IMR-90 (cell line): ENCODE measurements at regions of chr20 and their contacts with region 1.

Region 1: DNA sequence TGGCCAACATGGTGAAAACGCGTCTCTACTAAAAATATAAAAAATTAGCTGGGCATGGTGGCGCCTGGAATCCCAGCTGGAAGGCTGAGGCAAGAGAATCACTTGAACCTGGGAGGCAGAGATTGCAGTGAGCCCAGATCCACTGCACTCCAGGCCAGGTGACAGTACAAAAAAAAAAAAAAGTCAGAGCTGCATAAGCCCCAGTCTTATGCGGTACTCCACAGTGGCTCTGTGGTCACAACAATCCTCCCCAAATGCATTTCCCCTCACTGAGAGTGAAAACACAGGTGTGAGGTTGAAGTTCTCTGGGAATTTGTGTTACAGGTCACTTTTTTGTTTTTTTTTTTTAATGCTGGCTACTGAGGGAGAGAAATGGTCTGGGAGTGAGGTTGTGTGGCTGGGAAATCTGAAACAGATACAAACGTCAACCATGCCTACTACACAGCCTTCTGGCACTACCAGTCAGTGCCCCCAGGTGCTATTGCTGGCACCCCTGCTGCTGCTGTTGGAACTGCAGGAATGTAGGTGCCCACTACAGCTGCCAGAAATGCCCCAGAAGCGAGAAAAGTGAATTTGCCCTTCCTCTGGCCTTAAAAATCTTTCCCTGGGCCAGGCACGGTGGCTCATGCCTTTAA is 5.7 kb downstream of the MRPS26 start:
- DNase-seq: no peak
- ATAC-seq: no peak
- H3K4me3 ChIP-seq: no peak overlapping the region
- H3K27ac ChIP-seq: no peak overlapping the region
- H3K4me1 ChIP-seq: peaks cover 4% of the 10 kb centered on the region; the same call in 1 of the 2 replicates
- H3K27me3 ChIP-seq: no peaks in the 10 kb centered on the region
- CTCF ChIP-seq: no peak
- POLR2A ChIP-seq: no peak
- RAD21 ChIP-seq: no peak

Region 2: GRCh38 chr20:3077618-3078134 is 26.2 kb after region 1 on chr20:
- CTCF ChIA-PET with region 1: no interaction called
- POLR2A ChIA-PET with region 1: no interaction called
- dilution Hi-C with region 1: no loop called
- in situ Hi-C with region 1: no loop called
- intact Hi-C with region 1: loop called (anchors 1 kb)
- DNase-seq: no peak
- ATAC-seq: no peak
- H3K4me3 ChIP-seq: no peak overlapping the region
- H3K27ac ChIP-seq: no peak overlapping the region
- H3K4me1 ChIP-seq: no peaks in the 10 kb centered on the region; the same call in 1 of the 2 replicates
- H3K27me3 ChIP-seq: peaks cover 42% of the 10 kb centered on the region
- CTCF ChIP-seq: no peak
- POLR2A ChIP-seq: no peak
- RAD21 ChIP-seq: no peak

Region 3: DNA sequence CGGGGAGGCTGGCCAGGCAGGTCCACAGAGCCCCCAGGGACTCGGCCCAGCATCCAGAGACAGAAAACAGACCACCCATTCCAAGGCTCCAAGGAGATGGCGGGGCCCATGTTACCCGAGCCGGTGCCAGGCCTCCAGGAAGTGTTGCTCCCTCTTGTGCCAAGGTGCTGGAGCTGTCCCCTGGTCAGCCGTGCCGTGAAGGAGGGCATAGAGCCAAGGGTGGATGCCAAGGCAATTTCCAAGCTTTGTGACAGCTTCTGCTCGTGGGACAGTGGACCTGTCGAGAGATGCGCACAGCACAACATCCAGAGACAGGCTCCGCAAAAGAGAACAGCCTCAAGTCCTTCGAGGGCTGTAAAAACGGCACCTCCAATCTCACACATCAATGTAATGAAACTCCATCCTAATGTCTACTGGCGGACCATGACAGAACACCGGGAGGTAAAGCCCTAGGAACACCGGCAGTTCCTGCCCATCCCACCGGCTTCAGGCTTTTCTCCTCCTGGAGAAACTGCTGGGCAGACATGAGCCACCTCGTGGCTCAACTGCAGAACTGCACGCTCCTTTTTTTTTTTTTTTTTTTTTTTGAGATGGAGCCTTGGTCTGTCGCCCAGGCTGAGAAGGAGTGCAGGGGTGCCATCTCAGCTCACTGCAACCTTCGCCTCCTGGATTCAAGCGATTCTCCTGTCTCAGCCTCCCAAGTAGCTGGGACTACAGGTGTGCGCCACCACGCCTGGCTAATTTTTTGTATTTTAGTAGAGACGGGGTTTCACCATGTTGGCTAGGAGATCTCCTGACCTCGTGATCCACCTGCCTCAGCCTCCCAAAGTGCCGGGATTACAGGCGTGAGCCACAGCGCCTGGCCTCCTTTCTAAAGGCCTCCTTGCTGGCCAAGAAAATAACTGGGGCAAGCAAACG is 63.9 kb after region 1 on chr20:
- CTCF ChIA-PET with region 1: interaction called, 7 read pairs
- POLR2A ChIA-PET with region 1: no interaction called
- dilution Hi-C with region 1: no loop called
- in situ Hi-C with region 1: no loop called
- intact Hi-C with region 1: loop called (anchors 1 kb)
- DNase-seq: peak; percentile 59
- ATAC-seq: peak; percentile 85
- H3K4me3 ChIP-seq: no peak overlapping the region
- H3K27ac ChIP-seq: no peak overlapping the region
- H3K4me1 ChIP-seq: no peaks in the 10 kb centered on the region
- H3K27me3 ChIP-seq: no peaks in the 10 kb centered on the region
- CTCF ChIP-seq: peak; percentile 81
- POLR2A ChIP-seq: no peak
- RAD21 ChIP-seq: peak; percentile 67

Region 4: DNA sequence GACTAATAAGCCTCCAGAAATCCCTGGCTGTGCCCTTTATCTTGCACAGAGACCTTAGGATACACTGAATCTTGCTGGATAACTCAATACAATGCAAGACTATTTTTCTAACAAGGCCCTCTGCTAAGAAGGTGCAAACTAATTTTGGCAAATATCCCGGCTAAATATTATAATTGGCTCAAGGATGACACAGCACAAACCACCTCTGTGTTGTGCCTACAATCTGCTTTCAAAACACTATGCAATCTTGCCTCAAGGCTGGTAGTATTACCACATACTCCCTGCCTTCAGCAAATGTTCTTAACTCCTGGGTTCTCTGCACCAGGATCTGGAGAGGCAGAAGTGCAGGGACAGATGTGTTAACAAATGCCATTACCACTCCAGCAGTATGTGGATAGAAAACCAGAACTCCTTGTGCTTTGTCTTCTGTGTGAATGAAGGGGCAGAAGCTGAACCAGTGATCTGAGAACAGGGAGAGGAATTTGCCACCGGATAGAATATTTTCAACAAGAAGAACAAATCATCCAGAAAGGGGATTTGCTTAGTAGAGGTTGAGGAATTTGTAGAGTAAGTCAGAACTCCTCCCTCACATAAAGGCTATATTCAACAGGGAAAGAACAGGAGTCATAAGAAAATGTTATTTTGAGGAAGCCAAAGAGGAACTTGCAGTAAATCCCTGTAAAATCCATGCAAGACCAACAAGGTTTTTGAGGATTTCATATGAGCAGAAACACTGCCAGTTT is 261.6 kb after region 1 on chr20:
- CTCF ChIA-PET with region 1: no interaction called
- POLR2A ChIA-PET with region 1: no interaction called
- dilution Hi-C with region 1: no loop called
- in situ Hi-C with region 1: no loop called
- intact Hi-C with region 1: loop called (anchors 10 kb)
- DNase-seq: peak; percentile 53
- ATAC-seq: peak; percentile 70
- H3K4me3 ChIP-seq: no peak overlapping the region
- H3K27ac ChIP-seq: peak overlapping the region; percentile 74; the same call in 1 of the 2 replicates
- H3K4me1 ChIP-seq: peaks cover 10% of the 10 kb centered on the region
- H3K27me3 ChIP-seq: no peaks in the 10 kb centered on the region
- CTCF ChIP-seq: no peak
- POLR2A ChIP-seq: no peak
- RAD21 ChIP-seq: no peak